OCI-LY7 (cell line): ENCODE measurements at regions of chr1 and their contacts with region 1.

Region 1: GRCh38 chr1:59699227-59699847 is 115.4 kb upstream of the HOOK1 start:
- DNase-seq: peak; percentile 47
- H3K4me3 ChIP-seq: no peak overlapping the region
- H3K27ac ChIP-seq: no peak overlapping the region
- H3K4me1 ChIP-seq: no peaks in the 10 kb centered on the region
- CTCF ChIP-seq: peak; percentile 97

Region 2: DNA sequence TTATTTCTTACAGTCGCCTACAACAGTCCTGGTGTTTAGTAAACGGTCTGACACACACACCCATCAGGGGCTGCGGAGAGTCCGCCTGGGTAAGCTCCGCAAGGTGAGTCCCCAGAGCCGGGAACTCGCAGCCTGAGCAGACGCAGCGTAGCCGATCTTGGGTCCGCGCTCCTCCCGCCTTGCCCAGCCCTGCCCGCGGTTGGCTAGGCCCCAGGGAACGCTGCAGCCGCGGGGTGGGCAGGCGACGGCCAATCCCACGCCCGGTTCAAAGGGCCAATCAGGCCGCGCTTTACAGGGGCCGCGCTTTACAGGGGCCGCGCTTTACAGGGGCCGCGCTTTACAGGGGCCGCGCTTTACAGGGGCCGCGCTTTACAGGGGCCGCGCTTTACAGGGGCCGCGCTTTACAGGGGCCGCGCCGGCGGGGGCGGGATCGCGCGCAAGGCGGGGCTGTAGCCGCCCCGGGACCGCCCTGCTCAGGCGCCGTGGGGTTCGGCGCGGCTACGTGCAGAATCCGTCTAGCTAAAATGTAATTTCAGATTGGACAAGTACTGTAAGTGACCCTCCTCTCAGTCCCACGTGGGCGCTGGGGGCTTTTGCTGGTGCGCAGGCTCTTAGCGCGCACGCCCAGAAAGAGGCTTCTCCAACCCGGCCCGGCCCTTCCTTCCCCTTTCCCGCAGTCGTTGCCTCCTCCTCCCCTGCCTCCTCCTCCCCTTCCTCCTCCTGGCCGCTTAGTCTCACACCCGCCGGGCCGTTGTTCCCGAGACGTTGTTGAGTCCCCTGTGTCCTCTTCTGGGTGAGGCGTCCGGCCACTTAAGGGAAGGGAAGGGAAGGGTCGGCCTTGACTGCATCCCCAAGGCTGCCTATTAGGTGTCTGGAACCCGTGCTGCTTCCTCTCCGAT is 402.7 kb before region 1 on chr1 and contains the start of gene FGGY:
- CTCF ChIA-PET with region 1: no interaction called
- POLR2A ChIA-PET with region 1: no interaction called
- intact Hi-C with region 1: loop called (anchors 5 kb)
- DNase-seq: peak; percentile 11
- H3K4me3 ChIP-seq: peak within 1 kb of the TSS; percentile 56
- H3K27ac ChIP-seq: no peak within 1 kb of the TSS
- H3K4me1 ChIP-seq: no peaks in the 10 kb centered on the region
- CTCF ChIP-seq: no peak
- total RNA-seq, gene FGGY: 0.18 and 0.63 TPM in 2 replicates

Region 3: GRCh38 chr1:59714966-59715365 is 15.6 kb after region 1 on chr1:
- CTCF ChIA-PET with region 1: no interaction called
- POLR2A ChIA-PET with region 1: no interaction called
- intact Hi-C with region 1: no loop called
- DNase-seq: no peak
- H3K4me3 ChIP-seq: no peak overlapping the region
- H3K27ac ChIP-seq: no peak overlapping the region
- H3K4me1 ChIP-seq: no peaks in the 10 kb centered on the region
- CTCF ChIP-seq: no peak

Region 4: DNA sequence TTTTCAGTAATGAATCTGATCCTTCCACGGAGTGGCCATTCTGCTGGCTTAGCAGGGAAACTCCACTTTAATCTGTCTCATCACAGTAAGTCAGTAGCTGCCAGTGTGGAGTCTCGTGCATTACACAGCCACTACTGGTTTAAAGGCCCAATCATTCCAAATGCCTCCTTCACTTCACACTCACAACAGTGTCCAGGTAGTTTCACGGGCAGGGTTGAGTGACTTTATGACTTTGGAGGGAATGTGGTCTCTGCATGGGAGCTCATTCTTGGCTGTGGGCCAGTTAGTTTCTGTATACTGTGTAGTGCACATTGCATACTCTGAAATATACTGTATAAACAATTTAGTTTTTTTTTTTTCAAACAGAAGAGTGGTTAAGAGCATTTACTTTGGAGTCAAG is 408.9 kb after region 1 on chr1:
- CTCF ChIA-PET with region 1: no interaction called
- POLR2A ChIA-PET with region 1: no interaction called
- intact Hi-C with region 1: no loop called
- DNase-seq: no peak
- H3K4me3 ChIP-seq: no peak overlapping the region
- H3K27ac ChIP-seq: no peak overlapping the region
- H3K4me1 ChIP-seq: no peaks in the 10 kb centered on the region
- CTCF ChIP-seq: no peak